Right ventricle myocardium inferior (tissue), 1 donor: ENCODE measurements at regions of chr2 and their contacts with region 1.

Region 1: DNA sequence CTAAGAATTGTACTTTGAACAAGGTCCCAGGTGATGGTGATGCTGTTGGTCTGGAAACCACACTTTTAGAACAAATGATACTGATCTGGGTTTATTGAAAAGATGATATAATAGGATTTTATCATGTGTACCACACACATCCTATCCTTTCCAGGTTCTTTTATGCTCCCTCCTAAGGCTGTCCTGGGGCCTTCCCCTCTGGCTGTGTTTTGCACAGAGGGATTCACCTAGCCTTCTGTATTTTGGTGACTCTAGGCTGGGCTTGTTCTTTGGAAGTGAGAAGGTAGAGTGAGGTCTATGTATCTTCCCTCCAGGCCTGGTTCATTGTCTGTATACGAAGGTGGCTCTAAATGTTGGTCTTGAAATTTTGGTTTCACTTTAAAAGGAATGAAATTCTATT is 12.7 kb downstream of the ANXA4 start:
- DNase-seq: no peak
- ATAC-seq: no peak

Region 2: GRCh38 chr2:69436938-69437750 is 317.5 kb before region 1 on chr2 and contains the start of gene NFU1:
- intact Hi-C with region 1: no loop called
- DNase-seq: peak; percentile 96
- ATAC-seq: peak; percentile 99
- total RNA-seq, gene NFU1: 122 TPM

Region 3: GRCh38 chr2:69798909-69799526 is 44.4 kb after region 1 on chr2:
- intact Hi-C with region 1: loop called (anchors 5 kb)
- DNase-seq: no peak
- ATAC-seq: peak; percentile 34

Region 4: GRCh38 chr2:69933839-69934613 is 179.4 kb after region 1 on chr2:
- intact Hi-C with region 1: no loop called
- DNase-seq: no peak
- ATAC-seq: peak; percentile 71